Pancreas (tissue), 10 donors: ENCODE measurements at regions of chr7 and their contacts with region 1.

Region 1: GRCh38 chr7:73865738-73866445 is 4.9 kb downstream of the TMEM270 start:
- DNase-seq: peak in 1 of 6 donors; percentile 53
- ATAC-seq: peak in 3 of 4 donors; percentile 80 to 89 (median 87)
- H3K4me3 ChIP-seq: no peak overlapping the region
- H3K27ac ChIP-seq: no peak overlapping the region
- H3K4me1 ChIP-seq: no peaks in the 10 kb centered on the region
- H3K27me3 ChIP-seq: no peaks in the 10 kb centered on the region
- CTCF ChIP-seq: peak; percentile 7 to 47 (median 32)

Region 2: DNA sequence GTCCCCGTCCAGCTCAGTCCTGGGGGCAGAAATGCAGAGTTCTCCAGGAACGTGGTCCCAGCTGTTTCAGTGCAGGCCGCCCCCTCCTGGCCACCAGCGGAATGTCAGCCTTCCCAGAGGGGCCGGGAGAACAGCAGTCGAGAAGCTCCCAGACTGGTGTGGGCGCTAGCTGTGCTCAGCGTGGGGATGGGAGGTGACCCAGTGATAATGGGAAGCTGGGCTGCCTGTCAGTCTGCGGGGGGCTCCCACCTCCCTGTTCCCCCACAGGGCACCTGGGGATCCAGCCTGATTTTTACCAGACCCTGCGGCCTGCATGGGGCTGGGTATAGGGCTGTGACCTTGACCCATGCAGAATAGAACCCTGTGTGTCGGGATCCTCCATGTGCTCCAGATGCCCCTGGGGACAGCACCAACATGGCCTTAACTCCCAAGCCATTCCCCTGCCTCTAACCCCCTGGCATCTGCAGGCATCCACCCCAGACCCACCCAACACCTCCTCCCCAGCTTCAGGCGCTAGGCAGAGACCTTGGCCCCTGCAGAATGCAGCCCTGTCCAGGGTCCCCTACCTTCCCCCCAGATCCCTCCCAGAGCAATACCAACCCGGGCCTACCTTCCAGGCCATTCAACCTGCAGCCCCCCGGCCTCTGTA is 161.1 kb after region 1 on chr7:
- intact Hi-C with region 1: loop called in 2 of 3 experiments (anchors 5 to 10 kb)
- DNase-seq: peak; percentile 68 to 91 (median 84)
- ATAC-seq: peak; percentile 57 to 75 (median 70)
- H3K4me3 ChIP-seq: peak overlapping the region in 2 of 4 donors; percentile 63 to 65
- H3K27ac ChIP-seq: peak overlapping the region; percentile 70 to 83 (median 74)
- H3K4me1 ChIP-seq: peaks cover 8 to 24% (median 23%) of the 10 kb centered on the region in 3 donors
- H3K27me3 ChIP-seq: no peaks in the 10 kb centered on the region
- CTCF ChIP-seq: peak; percentile 90 to 94 (median 91)